WTC11 (cell line): ENCODE measurements at regions of chr6 and their contacts with region 1.

Region 1: DNA sequence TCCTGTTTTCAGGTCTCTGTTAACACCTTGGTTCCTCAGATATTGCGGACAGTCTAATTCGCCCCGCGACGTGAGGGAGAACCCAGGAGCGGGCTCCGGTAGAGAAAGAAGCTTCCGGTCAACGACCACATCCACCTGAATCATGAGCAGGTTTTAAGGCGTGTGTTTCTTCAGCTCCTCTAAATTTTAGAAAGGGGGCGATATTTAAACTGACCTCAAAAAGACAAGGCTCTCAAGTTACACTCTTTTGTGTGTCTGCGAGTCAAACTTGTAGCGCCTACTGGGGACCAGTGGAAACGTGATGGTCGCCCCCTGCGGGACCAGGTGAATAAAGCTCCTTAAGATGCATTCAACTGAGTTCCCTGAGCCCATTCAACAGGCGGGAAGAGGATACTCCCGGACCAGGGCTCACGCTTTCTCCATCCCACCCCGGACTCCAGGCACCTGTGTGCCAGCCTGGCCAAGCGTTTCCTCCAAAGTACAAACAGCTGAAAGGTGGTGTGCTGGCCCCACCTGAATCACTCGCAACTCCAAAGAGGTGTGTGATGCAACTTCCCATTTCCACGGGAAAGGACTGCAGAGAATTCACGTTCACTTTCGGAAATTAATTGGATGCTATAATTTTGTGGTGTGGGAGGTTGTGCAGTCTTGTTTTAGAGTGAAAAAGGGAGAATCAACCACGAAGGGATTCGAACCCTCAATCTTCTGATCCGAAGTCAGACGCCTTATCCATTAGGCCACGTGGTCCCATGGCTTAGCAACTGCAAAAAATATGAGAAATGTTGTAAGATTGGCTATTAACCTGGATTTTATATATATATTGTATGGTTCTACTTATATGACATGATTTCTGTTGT is 17.0 kb downstream of the GPX5 start:
- DNase-seq: peak; percentile 95
- ATAC-seq: peak; percentile 88
- H3K4me3 Mint-ChIP-seq: peak overlapping the region; percentile 90
- H3K27ac Mint-ChIP-seq: peak overlapping the region; percentile 99
- H3K4me1 Mint-ChIP-seq: peaks cover 23% of the 10 kb centered on the region
- H3K27me3 Mint-ChIP-seq: peaks cover 10% of the 10 kb centered on the region
- CTCF ChIP-seq: peak; percentile 40; the same call in 1 of the 2 replicates

Region 2: GRCh38 chr6:27838058-27838944 is 704.4 kb before region 1 on chr6:
- CTCF ChIA-PET with region 1: no interaction called
- POLR2A ChIA-PET with region 1: no interaction called
- DNase-seq: peak; percentile 84
- ATAC-seq: peak; percentile 84
- H3K4me3 Mint-ChIP-seq: no peak overlapping the region
- H3K27ac Mint-ChIP-seq: no peak overlapping the region
- H3K4me1 Mint-ChIP-seq: peaks cover 28% of the 10 kb centered on the region
- H3K27me3 Mint-ChIP-seq: no peaks in the 10 kb centered on the region
- CTCF ChIP-seq: no peak

Region 3: DNA sequence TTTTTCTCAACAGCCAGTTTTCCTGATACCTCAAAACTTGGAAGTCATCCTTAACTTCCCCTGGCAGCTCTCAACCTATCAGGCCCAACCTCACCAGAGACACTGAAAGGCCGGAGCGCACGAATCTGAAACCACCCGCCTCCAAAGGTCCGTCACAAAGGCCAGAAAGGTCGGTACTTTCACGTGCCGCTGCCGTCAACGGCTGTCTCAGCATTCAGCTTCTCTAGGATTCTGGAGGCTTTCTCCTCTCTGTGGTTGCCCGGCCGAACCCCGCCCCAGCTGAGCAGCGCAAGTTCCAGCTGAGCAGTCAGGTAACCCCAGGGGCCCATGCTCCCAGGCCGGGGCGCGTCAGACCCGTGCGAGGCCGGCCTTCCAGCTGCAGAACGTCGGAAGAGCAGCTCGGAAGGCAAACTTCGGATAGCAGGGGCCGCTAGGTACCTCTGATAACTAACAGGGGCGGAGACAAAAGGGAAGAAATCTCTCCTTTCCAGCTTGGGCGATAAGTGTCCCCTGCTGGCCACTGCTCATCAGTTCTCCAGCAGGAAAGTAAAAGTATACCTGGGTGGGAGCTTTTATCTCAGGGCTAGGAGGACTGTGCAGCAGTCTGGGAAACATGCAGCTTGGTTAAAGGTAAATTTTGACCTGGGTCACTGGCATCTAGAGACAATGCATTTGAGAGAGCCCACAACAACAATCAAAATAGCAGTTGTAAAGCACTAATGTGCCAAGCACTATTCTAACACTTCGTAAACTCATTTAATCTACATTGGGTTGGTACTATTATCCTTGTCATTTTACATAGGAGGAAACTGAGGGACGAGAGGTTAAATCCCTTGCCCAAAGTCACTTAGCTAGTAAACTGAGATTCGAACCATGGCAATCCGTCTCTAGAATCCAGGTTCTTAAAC is 159.2 kb before region 1 on chr6:
- CTCF ChIA-PET with region 1: interaction called, 12 read pairs
- POLR2A ChIA-PET with region 1: no interaction called
- DNase-seq: peak; percentile 94
- ATAC-seq: peak; percentile 93
- H3K4me3 Mint-ChIP-seq: peak overlapping the region; percentile 76
- H3K27ac Mint-ChIP-seq: peak overlapping the region; percentile 98
- H3K4me1 Mint-ChIP-seq: peaks cover 26% of the 10 kb centered on the region
- H3K27me3 Mint-ChIP-seq: no peaks in the 10 kb centered on the region
- CTCF ChIP-seq: peak; percentile 12; the same call in 1 of the 2 replicates

Region 4: GRCh38 chr6:28489366-28490204 is 53.1 kb before region 1 on chr6:
- CTCF ChIA-PET with region 1: interaction called, 25 read pairs
- POLR2A ChIA-PET with region 1: interaction called, 5 read pairs
- DNase-seq: peak; percentile 78
- ATAC-seq: peak; percentile 95
- H3K4me3 Mint-ChIP-seq: peak overlapping the region; percentile 90
- H3K27ac Mint-ChIP-seq: peak overlapping the region; percentile 83
- H3K4me1 Mint-ChIP-seq: peaks cover 18% of the 10 kb centered on the region
- H3K27me3 Mint-ChIP-seq: peaks cover 6% of the 10 kb centered on the region; the same call in 1 of the 2 replicates
- CTCF ChIP-seq: no peak

Region 5: GRCh38 chr6:28525496-28526039 is 17.1 kb before region 1 on chr6 and contains the start of gene GPX5:
- CTCF ChIA-PET with region 1: interaction called, 47 read pairs
- POLR2A ChIA-PET with region 1: no interaction called
- DNase-seq: no peak
- ATAC-seq: peak; percentile 84
- H3K4me3 Mint-ChIP-seq: no peak within 1 kb of the TSS
- H3K27ac Mint-ChIP-seq: no peak within 1 kb of the TSS
- H3K4me1 Mint-ChIP-seq: peaks cover 11% of the 10 kb centered on the region
- H3K27me3 Mint-ChIP-seq: peaks cover 14% of the 10 kb centered on the region
- CTCF ChIP-seq: no peak
- total RNA-seq, gene GPX5: not detected in 3 replicates

Region 6: DNA sequence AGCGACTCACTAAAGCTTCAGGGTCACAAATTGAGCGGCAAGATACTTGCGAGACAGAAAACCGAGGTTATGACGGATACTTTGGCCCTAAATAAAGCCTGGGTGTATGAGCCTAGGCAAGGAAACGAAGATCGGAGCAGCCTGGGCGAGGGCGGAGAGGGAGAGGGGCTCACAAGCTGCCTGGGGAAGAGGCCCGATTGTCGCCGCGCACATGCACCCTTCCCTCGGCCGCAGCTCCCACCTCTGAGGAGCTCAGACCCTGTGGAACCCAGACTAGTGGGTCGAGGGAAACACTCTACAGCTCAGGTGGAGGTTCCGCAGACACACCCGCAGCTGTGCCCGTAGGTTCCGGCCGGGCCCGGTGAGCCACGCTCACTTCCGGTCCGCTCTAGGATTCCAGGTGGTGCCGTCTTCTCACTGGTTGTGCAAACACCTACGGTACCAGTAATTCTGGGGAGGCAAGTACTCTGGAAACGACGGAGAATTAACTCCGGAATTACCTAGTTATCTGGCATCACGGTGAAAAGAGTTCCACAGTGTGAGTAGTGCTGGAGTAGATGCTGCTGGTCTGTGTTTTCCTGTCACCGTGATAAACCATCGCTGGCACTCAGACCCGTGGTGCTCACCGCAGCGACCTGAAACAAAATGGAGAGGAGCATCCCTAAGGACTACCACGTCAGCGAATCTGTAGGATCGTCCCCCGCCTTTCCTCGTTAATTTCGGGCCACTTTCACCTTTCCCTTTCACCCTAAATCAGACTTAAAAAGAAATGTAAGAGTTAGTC is 44.5 kb after region 1 on chr6:
- CTCF ChIA-PET with region 1: interaction called, 27 read pairs
- POLR2A ChIA-PET with region 1: interaction called, 5 read pairs
- DNase-seq: peak; percentile 84
- ATAC-seq: peak; percentile 70
- H3K4me3 Mint-ChIP-seq: peak overlapping the region; percentile 91
- H3K27ac Mint-ChIP-seq: peak overlapping the region; percentile 95
- H3K4me1 Mint-ChIP-seq: peaks cover 41% of the 10 kb centered on the region
- H3K27me3 Mint-ChIP-seq: peaks cover 21% of the 10 kb centered on the region
- CTCF ChIP-seq: no peak

Region 7: DNA sequence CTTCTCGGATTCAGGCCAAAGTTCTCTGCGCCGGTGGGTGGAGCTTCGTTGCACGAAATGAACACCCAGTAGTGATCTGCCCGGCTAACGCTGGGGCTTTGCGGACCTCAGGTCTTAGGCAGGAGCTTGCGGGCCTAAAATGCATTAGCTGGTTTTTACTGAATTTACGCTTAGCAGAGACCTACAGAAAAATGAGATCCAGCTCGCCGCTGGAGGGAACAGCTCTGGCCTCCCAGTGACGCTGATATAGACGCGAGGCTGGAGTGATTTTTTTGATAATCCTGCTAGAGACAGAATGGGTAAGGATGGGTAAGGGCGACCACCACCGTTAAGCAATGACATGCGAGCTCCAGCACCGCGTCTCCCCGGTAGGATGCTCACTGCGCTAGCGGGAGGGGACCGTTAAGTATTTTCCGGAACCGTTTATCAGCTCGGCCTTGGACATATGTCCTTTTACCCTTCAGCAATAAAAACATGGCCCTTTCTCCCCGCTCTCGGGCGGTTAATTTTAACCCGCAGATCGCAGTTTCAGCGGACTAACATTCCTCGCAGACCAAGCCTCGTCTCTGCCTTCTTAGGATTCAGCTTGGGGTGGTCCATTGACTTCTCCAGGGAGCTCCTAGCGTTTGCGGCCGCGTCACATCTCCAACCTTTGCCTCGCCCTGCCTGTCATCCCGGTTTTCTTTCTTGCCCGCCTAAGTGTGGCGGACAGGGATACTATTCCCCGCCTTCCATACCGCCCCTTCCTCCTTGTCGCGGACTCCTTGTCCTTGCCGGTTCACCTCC is 92.3 kb after region 1 on chr6:
- CTCF ChIA-PET with region 1: interaction called, 21 read pairs
- POLR2A ChIA-PET with region 1: no interaction called
- DNase-seq: peak; percentile 70
- ATAC-seq: peak; percentile 84
- H3K4me3 Mint-ChIP-seq: peak overlapping the region; percentile 87
- H3K27ac Mint-ChIP-seq: peak overlapping the region; percentile 18; the same call in 1 of the 2 replicates
- H3K4me1 Mint-ChIP-seq: peaks cover 14% of the 10 kb centered on the region
- H3K27me3 Mint-ChIP-seq: peaks cover 74% of the 10 kb centered on the region
- CTCF ChIP-seq: no peak